ENCODE measurements at regions of chr7 and their contacts with region 1.

Region 1: GRCh38 chr7:1105189-1105588 is 17.3 kb downstream of the GPER1 start:
- DNase-seq: no peak
- ATAC-seq: no peak
- H3K4me3 ChIP-seq: no peak overlapping the region
- H3K4me3 Mint-ChIP-seq: no peak overlapping the region
- H3K27ac ChIP-seq: no peak overlapping the region
- H3K27ac Mint-ChIP-seq: no peak overlapping the region
- H3K4me1 ChIP-seq: peaks cover 22% of the 10 kb centered on the region
- H3K4me1 Mint-ChIP-seq: peaks cover 17% of the 10 kb centered on the region
- H3K27me3 ChIP-seq: no peaks in the 10 kb centered on the region
- H3K27me3 Mint-ChIP-seq: no peaks in the 10 kb centered on the region
- CTCF ChIP-seq: no peak

Region 2: GRCh38 chr7:418647-419280 is 686.4 kb before region 1 on chr7:
- CTCF ChIA-PET with region 1: no interaction called
- POLR2A ChIA-PET with region 1: no interaction called
- intact Hi-C with region 1: loop called in 1 of 2 experiments (anchors 5 kb)
- DNase-seq: no peak
- ATAC-seq: no peak
- H3K4me3 ChIP-seq: no peak overlapping the region
- H3K4me3 Mint-ChIP-seq: no peak overlapping the region
- H3K27ac ChIP-seq: no peak overlapping the region
- H3K27ac Mint-ChIP-seq: no peak overlapping the region
- H3K4me1 ChIP-seq: peaks cover 5% of the 10 kb centered on the region
- H3K4me1 Mint-ChIP-seq: no peaks in the 10 kb centered on the region
- H3K27me3 ChIP-seq: no peaks in the 10 kb centered on the region
- H3K27me3 Mint-ChIP-seq: no peaks in the 10 kb centered on the region
- CTCF ChIP-seq: no peak

Region 3: DNA sequence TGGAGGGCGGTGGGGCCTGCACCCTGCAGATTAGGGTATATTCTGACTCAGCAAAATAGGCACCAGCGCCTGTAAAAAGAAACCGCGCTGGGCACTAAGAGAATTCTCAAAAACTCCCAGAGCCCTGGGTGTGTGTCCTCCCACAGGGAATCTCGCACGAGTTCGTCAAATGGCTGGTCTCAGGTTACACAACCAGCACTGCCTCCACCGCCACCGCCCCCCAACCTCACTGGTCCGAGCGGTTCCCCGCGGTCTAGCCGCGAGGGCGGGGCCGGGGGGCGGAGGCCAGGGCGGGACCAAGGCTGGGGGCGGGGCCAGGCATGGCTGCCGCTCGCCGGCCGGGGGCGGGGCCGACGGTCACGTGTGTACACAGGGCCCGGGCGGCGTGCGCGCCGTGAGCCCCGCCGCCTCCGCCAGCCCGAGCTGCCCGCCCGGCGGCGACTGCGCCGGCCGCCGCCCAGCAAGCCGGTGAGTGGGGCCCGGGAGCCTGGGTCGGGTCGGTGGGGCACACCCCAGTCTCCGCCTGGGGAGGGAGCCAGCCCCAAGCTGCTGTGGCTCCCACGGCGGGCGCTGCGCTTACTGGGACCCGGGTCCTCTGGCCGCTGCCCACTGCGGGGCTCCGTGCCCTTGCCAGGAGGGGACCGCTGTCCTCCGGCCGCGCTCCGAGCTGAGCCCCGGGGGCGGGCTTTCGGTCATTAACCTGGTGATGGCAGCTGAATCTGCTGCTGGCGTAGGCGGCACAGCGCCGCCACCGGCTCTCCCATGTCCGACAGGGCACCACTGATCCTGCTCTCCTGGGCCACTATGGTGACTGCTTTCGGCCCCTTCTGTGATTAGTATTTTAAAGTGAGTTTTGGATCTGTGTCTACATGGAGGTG is 60.8 kb before region 1 on chr7 and contains the start of gene GPR146:
- CTCF ChIA-PET with region 1: no interaction called
- POLR2A ChIA-PET with region 1: no interaction called
- intact Hi-C with region 1: no loop called
- DNase-seq: peak; percentile 82 to 95 (median 90)
- ATAC-seq: peak; percentile 80
- H3K4me3 ChIP-seq: peak within 1 kb of the TSS; percentile 50
- H3K4me3 Mint-ChIP-seq: peak within 1 kb of the TSS; percentile 91
- H3K27ac ChIP-seq: peak within 1 kb of the TSS in 1 of 2 donors; percentile 56
- H3K27ac Mint-ChIP-seq: peak within 1 kb of the TSS; percentile 79
- H3K4me1 ChIP-seq: peaks cover 67% of the 10 kb centered on the region
- H3K4me1 Mint-ChIP-seq: peaks cover 60% of the 10 kb centered on the region
- H3K27me3 ChIP-seq: no peaks in the 10 kb centered on the region
- H3K27me3 Mint-ChIP-seq: no peaks in the 10 kb centered on the region
- CTCF ChIP-seq: peak; percentile 66
- total RNA-seq, gene GPR146: 9.9 to 13.7 TPM